ENCODE measurements at regions of chr17 and their contacts with region 1.

Region 1: GRCh38 chr17:40355123-40355803 is 9.3 kb downstream of the GJD3 start:
- DNase-seq: peak; percentile 92
- H3K4me3 ChIP-seq: no peak overlapping the region; a peak in 1 of 4 replicates
- H3K27ac ChIP-seq: peak overlapping the region in 1 of 2 experiments; percentile 79; a peak in 2 of 4 replicates
- H3K4me1 ChIP-seq: peaks cover 9 to 57% of the 10 kb centered on the region in 2 experiments; a peak in 3 of 4 replicates
- H3K27me3 ChIP-seq: no peaks in the 10 kb centered on the region
- CTCF ChIP-seq: peak; percentile 92
- EP300 ChIP-seq: no peak
- RAD21 ChIP-seq: peak; percentile 93

Region 2: GRCh38 chr17:40303009-40303657 is 52.1 kb before region 1 on chr17:
- CTCF ChIA-PET with region 1: interaction called, 1,706 read pairs
- POLR2A ChIA-PET with region 1: interaction called, 16 read pairs
- DNase-seq: peak; percentile 63
- H3K4me3 ChIP-seq: no peak overlapping the region; a peak in 1 of 4 replicates
- H3K27ac ChIP-seq: peak overlapping the region; percentile 82 to 99
- H3K4me1 ChIP-seq: peaks cover 48 to 53% of the 10 kb centered on the region in 2 experiments
- H3K27me3 ChIP-seq: no peaks in the 10 kb centered on the region
- CTCF ChIP-seq: peak; percentile 86
- EP300 ChIP-seq: 0 out of 4 replicates have a peak, but pooled peaks of 1 of the 2 experiments have one; percentile 45
- RAD21 ChIP-seq: peak; percentile 96

Region 3: GRCh38 chr17:40309031-40309948 is 46.0 kb before region 1 on chr17 and contains the start of gene RARA:
- CTCF ChIA-PET with region 1: interaction called, 1,706 read pairs
- POLR2A ChIA-PET with region 1: interaction called, 16 read pairs
- DNase-seq: peak; percentile 67
- H3K4me3 ChIP-seq: peak within 1 kb of the TSS; percentile 65 to 69
- H3K27ac ChIP-seq: peak within 1 kb of the TSS; percentile 95 to 99
- H3K4me1 ChIP-seq: peaks cover 69 to 90% of the 10 kb centered on the region in 2 experiments
- H3K27me3 ChIP-seq: no peaks in the 10 kb centered on the region
- CTCF ChIP-seq: no peak
- EP300 ChIP-seq: no peak
- RAD21 ChIP-seq: peak; percentile 27
- polyA plus RNA-seq, gene RARA: 8.9 and 13.3 TPM in 2 replicates

Region 4: DNA sequence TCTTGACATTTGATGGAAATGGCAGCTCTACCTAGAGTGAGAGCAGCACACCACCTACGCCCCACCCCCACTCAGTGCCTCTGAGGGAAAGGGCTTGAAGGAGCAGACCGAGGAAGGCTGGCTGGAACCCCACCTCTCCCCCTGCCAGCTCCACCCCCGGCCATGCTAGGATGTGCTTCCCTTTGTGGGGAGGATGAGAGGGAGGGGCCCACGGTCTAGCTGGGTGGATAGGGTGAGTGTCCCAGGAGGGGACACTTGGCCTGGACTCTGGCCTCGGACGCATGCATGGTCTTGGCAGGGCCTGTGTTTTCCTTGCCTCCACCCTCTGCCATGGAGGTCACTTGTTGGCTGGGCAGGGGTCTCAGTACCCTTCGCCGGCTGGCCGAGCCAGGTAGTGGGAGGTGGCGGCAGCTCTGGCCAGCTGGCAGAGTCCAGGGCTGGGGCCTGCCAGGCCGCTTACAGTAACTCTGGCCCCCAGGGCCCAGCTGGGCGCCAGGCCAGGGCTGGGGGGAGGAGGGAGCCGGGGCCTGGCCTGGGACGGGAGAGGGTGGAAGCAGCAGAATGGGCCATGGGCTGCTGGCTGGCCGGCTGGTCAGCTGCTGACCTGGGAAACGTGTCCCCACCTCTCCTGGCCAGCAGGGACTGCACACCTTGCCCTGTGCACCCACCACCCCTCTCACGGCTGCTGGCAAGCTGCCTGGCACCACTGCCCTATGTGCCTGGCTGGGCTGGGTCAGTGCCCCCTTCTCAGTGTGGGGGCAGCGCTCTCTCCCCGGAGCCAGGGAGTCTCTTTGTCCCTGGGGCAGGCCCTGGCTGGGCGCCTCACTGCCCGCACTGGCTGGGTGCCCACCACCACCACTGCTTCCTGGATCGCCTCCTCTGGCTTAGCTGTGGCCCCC is 23.3 kb before region 1 on chr17:
- CTCF ChIA-PET with region 1: interaction called, 171 read pairs
- POLR2A ChIA-PET with region 1: interaction called, 24 read pairs
- DNase-seq: peak; percentile 97
- H3K4me3 ChIP-seq: no peak overlapping the region; a peak in 1 of 4 replicates
- H3K27ac ChIP-seq: peak overlapping the region; percentile 81 to 98
- H3K4me1 ChIP-seq: peaks cover 55 to 73% of the 10 kb centered on the region in 2 experiments
- H3K27me3 ChIP-seq: no peaks in the 10 kb centered on the region
- CTCF ChIP-seq: no peak
- EP300 ChIP-seq: peak; percentile 76 to 94; a peak in 3 of 4 replicates
- RAD21 ChIP-seq: no peak

Region 5: DNA sequence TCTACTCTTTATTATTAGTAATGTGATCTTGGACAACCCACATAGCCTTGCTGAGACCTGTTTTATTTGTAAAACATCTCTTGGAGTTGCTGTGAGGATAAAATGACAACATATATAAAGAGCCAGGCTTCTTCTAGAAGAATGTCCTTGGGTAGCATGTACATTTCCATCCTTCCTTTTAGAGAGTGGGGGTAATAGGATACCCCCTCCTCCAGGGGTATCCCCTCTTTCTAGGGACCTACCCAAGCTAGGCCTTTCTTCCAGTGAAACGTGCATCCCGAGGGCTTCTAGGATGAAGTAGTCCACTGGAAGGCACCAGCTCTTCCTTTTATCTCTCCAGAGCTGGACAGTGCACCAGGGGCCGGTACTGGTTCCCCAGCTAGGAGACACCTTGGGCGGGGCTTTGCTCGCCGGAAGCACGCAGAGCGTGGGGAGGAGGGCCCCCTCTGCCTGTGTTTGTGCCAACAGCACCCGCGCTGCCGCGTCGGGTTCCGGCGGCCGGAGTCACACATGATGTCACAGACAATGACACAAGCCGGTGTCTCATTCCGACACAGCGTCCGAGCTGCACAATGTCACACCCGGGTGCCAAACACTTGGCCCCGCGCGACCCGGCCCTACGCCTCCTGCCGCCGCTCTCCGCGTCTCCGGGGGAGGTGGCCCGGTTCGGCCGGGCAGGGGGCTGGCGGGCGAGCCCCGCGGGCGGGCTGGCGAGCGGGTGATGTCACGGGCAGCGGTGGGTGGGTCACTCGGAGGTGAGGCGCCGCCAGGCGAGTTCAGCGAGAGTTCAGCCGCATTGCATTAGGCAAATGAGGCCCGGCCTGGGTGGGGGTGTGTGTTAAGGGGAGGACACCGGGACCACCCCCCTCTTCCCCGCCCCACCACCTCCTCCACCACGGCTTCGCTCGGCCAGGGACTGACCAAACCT is 14.1 kb before region 1 on chr17:
- CTCF ChIA-PET with region 1: interaction called, 171 read pairs
- POLR2A ChIA-PET with region 1: interaction called, 4 read pairs
- DNase-seq: peak; percentile 88
- H3K4me3 ChIP-seq: peak overlapping the region; percentile 69 to 78
- H3K27ac ChIP-seq: peak overlapping the region; percentile 73 to 99; a peak in 3 of 4 replicates
- H3K4me1 ChIP-seq: peaks cover 29 to 69% of the 10 kb centered on the region in 2 experiments
- H3K27me3 ChIP-seq: no peaks in the 10 kb centered on the region
- CTCF ChIP-seq: no peak
- EP300 ChIP-seq: 0 out of 4 replicates have a peak, but pooled peaks of 1 of the 2 experiments have one; percentile 3
- RAD21 ChIP-seq: peak; percentile 23

Region 6: DNA sequence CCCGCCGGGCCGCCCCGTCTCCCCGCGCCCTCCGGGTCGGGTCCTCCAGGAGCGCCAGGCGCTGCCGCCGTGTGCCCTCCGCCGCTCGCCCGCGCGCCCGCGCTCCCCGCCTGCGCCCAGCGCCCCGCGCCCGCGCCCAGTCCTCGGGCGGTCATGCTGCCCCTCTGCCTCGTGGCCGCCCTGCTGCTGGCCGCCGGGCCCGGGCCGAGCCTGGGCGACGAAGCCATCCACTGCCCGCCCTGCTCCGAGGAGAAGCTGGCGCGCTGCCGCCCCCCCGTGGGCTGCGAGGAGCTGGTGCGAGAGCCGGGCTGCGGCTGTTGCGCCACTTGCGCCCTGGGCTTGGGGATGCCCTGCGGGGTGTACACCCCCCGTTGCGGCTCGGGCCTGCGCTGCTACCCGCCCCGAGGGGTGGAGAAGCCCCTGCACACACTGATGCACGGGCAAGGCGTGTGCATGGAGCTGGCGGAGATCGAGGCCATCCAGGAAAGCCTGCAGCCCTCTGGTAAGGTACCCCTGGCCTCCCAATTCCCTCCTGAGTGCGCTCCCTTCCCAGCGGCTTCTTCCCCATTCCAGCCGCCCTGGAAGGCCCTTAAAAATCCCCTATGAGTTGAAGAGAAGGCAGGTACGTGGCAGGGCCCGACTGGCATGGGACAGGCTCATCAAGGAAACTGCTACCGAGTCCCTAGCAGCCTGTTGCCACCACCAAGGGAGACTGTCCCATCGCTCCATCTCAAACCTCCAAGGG is 88.5 kb after region 1 on chr17:
- CTCF ChIA-PET with region 1: interaction called, 13 read pairs
- POLR2A ChIA-PET with region 1: no interaction called
- DNase-seq: peak; percentile 92
- H3K4me3 ChIP-seq: peak overlapping the region; percentile 62 to 81
- H3K27ac ChIP-seq: peak overlapping the region; percentile 74 to 77
- H3K4me1 ChIP-seq: peaks cover 3 to 46% of the 10 kb centered on the region in 2 experiments; a peak in 2 of 4 replicates
- H3K27me3 ChIP-seq: no peaks in the 10 kb centered on the region
- CTCF ChIP-seq: peak; percentile 50
- EP300 ChIP-seq: no peak
- RAD21 ChIP-seq: peak; percentile 56

Region 7: DNA sequence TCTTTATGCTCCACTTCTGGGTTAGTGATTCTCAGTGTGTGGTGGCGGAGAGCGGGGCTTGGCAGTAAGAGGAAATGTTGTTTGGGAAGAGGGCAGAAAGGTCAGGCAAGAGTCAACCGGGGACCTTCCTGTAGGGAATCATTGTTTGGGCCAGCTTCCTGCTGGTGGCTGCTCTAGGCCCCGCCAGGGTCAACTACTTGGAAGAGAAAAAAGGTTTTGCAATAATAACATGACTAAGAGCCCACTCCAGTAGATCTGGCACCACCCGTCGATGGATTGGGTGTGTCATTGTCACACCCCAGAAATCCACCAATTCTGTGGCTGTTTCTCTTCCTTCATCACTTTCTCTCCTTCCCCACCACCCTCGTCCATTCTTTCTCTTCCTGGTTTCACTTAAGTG is 352.5 kb after region 1 on chr17:
- CTCF ChIA-PET with region 1: no interaction called
- POLR2A ChIA-PET with region 1: no interaction called
- DNase-seq: no peak
- H3K4me3 ChIP-seq: no peak overlapping the region
- H3K27ac ChIP-seq: no peak overlapping the region
- H3K4me1 ChIP-seq: no peaks in the 10 kb centered on the region
- H3K27me3 ChIP-seq: peaks cover 75% of the 10 kb centered on the region
- CTCF ChIP-seq: no peak
- EP300 ChIP-seq: no peak
- RAD21 ChIP-seq: no peak